KBM-7 (cell line): ENCODE measurements at regions of chr9 and their contacts with region 1.

Region 1: GRCh38 chr9:32378993-32379729 is 5.3 kb upstream of the ACO1 start:
- DNase-seq: peak; percentile 75

Region 2: GRCh38 chr9:32992595-32993238 is 613.6 kb after region 1 on chr9:
- in situ Hi-C with region 1: loop called (anchors 25 kb)
- DNase-seq: no peak